IMR-90 (cell line): ENCODE measurements at regions of chr1 and their contacts with region 1.

Region 1: DNA sequence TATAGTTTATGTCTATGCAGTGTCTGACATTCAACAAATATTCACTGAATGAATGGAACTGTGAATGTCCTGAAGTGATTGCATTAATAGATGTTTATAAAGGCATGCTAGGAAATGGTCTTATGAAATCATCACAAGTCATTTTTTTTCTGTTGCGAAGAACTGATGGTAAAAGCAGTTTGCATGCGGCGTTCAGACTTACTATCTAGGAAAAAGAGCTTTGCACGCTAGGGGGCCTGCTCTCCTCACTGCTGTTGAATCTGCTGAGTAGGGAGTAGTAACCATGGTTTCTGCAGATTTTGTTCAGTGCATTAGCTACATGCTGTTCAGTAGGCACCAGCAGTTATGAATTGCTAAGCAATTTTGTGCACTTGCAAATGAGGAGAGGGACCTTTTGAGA is 57.9 kb downstream of the CENPF start:
- DNase-seq: peak; percentile 96
- ATAC-seq: peak; percentile 95
- H3K4me3 ChIP-seq: no peak overlapping the region
- H3K27ac ChIP-seq: no peak overlapping the region
- H3K4me1 ChIP-seq: peaks cover 5% of the 10 kb centered on the region
- H3K27me3 ChIP-seq: no peaks in the 10 kb centered on the region
- CTCF ChIP-seq: peak; percentile 88
- POLR2A ChIP-seq: no peak
- RAD21 ChIP-seq: peak; percentile 92

Region 2: DNA sequence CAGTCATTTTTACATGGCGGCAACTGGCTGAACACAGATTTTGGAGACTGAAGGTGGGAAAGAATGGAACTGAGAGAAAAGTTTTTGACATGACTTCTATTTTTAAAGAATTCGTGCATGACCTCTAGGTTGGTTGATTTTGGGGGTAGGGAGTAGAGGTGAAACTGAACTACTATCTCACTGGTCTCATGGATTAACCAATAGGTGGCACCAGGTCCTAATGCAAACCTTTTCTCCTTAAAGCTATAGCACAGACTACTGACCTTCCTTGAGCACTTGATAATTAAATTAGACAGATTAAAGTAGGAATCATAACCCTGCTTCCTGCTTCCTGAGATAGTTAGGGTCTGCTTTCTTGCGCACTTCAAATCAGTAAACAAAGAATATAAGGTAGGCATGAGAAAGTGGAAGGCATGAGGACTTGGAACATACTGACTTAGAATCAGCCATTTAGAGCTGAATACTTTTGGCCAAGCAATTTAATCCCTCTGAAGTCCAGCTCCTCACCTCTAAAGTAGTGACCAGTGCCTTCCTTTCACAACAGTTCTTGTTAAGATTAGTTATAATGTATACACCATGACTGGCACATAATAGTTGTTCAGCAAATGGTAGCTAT is 148.1 kb after region 1 on chr1:
- CTCF ChIA-PET with region 1: interaction called, 5 read pairs
- POLR2A ChIA-PET with region 1: no interaction called
- dilution Hi-C with region 1: no loop called
- in situ Hi-C with region 1: no loop called
- intact Hi-C with region 1: loop called (anchors 5 kb)
- DNase-seq: peak; percentile 62
- ATAC-seq: peak; percentile 74
- H3K4me3 ChIP-seq: no peak overlapping the region
- H3K27ac ChIP-seq: no peak overlapping the region
- H3K4me1 ChIP-seq: peaks cover 1% of the 10 kb centered on the region; the same call in 1 of the 2 replicates
- H3K27me3 ChIP-seq: no peaks in the 10 kb centered on the region
- CTCF ChIP-seq: peak; percentile 57
- POLR2A ChIP-seq: no peak
- RAD21 ChIP-seq: peak; percentile 80

Region 3: DNA sequence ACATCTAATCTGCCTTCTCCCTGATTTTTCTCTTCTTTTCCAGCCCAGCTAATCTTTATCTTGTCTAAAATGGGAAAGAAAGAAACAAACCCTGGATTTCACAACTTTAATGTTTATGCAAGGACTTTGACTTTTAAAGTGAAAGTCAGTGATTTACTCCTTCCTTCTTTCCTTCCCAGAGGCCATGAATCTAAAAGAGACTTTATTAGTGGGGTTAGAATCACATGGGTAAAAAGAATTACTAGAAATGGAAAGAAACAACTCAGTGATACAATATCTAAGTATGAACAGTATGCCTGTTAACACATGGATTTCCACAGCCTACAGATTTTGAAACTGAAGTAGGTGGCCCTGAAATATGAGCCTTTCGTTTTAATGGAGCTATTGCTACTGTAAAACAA is 361.9 kb after region 1 on chr1:
- CTCF ChIA-PET with region 1: interaction called, 3 read pairs
- POLR2A ChIA-PET with region 1: no interaction called
- dilution Hi-C with region 1: no loop called
- in situ Hi-C with region 1: no loop called
- intact Hi-C with region 1: loop called (anchors 10 kb)
- DNase-seq: peak; percentile 85
- ATAC-seq: peak; percentile 86
- H3K4me3 ChIP-seq: peak overlapping the region; percentile 36; the same call in 1 of the 2 replicates
- H3K27ac ChIP-seq: peak overlapping the region; percentile 100
- H3K4me1 ChIP-seq: peaks cover 19% of the 10 kb centered on the region
- H3K27me3 ChIP-seq: no peaks in the 10 kb centered on the region
- CTCF ChIP-seq: no peak
- POLR2A ChIP-seq: no peak
- RAD21 ChIP-seq: no peak

Region 4: GRCh38 chr1:215146341-215146826 is 485.5 kb after region 1 on chr1:
- CTCF ChIA-PET with region 1: interaction called, 21 read pairs
- POLR2A ChIA-PET with region 1: no interaction called
- dilution Hi-C with region 1: no loop called
- in situ Hi-C with region 1: loop called (anchors 5 kb)
- intact Hi-C with region 1: loop called (anchors 1 kb)
- DNase-seq: peak; percentile 64
- ATAC-seq: no peak
- H3K4me3 ChIP-seq: no peak overlapping the region
- H3K27ac ChIP-seq: no peak overlapping the region
- H3K4me1 ChIP-seq: no peaks in the 10 kb centered on the region
- H3K27me3 ChIP-seq: no peaks in the 10 kb centered on the region
- CTCF ChIP-seq: peak; percentile 74
- POLR2A ChIP-seq: no peak
- RAD21 ChIP-seq: peak; percentile 76

Region 5: GRCh38 chr1:215517441-215517891 is 856.6 kb after region 1 on chr1:
- CTCF ChIA-PET with region 1: no interaction called
- POLR2A ChIA-PET with region 1: no interaction called
- dilution Hi-C with region 1: no loop called
- in situ Hi-C with region 1: loop called (anchors 5 kb)
- intact Hi-C with region 1: loop called (anchors 2 kb)
- DNase-seq: peak; percentile 91
- ATAC-seq: peak; percentile 88
- H3K4me3 ChIP-seq: no peak overlapping the region
- H3K27ac ChIP-seq: peak overlapping the region; percentile 85
- H3K4me1 ChIP-seq: peaks cover 3% of the 10 kb centered on the region
- H3K27me3 ChIP-seq: no peaks in the 10 kb centered on the region
- CTCF ChIP-seq: peak; percentile 47
- POLR2A ChIP-seq: no peak
- RAD21 ChIP-seq: peak; percentile 62